WTC11 (cell line): ENCODE measurements at regions of chr18 and their contacts with region 1.

Region 1: DNA sequence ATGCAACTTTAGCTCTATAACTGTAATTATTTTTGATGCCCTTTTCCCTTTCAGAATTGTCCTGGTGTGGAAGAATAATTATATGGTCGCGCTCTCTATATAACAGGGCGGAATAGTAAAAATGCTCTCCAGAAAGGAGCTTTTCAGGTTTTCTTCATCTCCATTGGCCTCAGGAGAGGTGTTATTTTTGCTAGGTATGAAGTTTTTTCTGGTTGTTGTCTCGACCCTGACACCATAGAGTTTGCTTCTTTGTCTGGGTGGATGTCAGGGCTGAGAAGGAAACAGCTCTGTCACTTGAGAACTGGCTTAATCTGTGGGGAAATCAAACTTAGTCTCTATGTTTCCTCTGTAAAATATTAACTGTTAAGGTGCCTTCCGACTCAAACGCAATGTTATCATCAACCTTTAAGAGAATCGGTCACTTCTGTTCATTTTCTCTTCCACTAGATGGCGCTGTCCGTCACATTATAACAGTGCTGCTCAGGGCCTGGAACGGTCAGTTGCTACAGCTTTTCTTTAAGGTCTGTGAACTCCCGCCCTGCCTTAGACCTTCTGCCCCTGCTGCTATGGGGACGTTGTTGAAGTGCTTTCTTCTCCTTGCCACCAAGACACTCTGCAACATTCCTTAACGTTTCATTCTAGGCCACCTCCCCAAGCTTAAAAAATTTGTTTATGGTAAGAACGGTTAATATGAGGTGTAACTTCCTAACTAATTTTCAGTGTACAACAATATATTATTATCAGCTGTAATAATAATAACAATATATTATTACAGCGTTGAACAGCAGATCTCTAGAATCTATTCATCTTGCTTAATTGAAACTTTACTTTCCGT is 23.8 kb upstream of the SERPINB12 start:
- DNase-seq: peak; percentile 66
- ATAC-seq: peak; percentile 90
- H3K4me3 Mint-ChIP-seq: no peak overlapping the region
- H3K27ac Mint-ChIP-seq: no peak overlapping the region
- H3K4me1 Mint-ChIP-seq: peaks cover 29% of the 10 kb centered on the region
- H3K27me3 Mint-ChIP-seq: no peaks in the 10 kb centered on the region
- CTCF ChIP-seq: peak; percentile 69

Region 2: GRCh38 chr18:63445037-63445436 is 73.4 kb before region 1 on chr18:
- CTCF ChIA-PET with region 1: no interaction called
- POLR2A ChIA-PET with region 1: no interaction called
- DNase-seq: no peak
- ATAC-seq: no peak
- H3K4me3 Mint-ChIP-seq: no peak overlapping the region
- H3K27ac Mint-ChIP-seq: no peak overlapping the region
- H3K4me1 Mint-ChIP-seq: no peaks in the 10 kb centered on the region
- H3K27me3 Mint-ChIP-seq: no peaks in the 10 kb centered on the region
- CTCF ChIP-seq: no peak

Region 3: GRCh38 chr18:63578357-63578958 is 60.1 kb after region 1 on chr18:
- CTCF ChIA-PET with region 1: interaction called, 100 read pairs
- POLR2A ChIA-PET with region 1: no interaction called
- DNase-seq: peak; percentile 39
- ATAC-seq: peak; percentile 67
- H3K4me3 Mint-ChIP-seq: no peak overlapping the region
- H3K27ac Mint-ChIP-seq: no peak overlapping the region
- H3K4me1 Mint-ChIP-seq: no peaks in the 10 kb centered on the region
- H3K27me3 Mint-ChIP-seq: no peaks in the 10 kb centered on the region
- CTCF ChIP-seq: peak; percentile 74